ENCODE measurements at regions of chr6 and their contacts with region 1.

Region 1: DNA sequence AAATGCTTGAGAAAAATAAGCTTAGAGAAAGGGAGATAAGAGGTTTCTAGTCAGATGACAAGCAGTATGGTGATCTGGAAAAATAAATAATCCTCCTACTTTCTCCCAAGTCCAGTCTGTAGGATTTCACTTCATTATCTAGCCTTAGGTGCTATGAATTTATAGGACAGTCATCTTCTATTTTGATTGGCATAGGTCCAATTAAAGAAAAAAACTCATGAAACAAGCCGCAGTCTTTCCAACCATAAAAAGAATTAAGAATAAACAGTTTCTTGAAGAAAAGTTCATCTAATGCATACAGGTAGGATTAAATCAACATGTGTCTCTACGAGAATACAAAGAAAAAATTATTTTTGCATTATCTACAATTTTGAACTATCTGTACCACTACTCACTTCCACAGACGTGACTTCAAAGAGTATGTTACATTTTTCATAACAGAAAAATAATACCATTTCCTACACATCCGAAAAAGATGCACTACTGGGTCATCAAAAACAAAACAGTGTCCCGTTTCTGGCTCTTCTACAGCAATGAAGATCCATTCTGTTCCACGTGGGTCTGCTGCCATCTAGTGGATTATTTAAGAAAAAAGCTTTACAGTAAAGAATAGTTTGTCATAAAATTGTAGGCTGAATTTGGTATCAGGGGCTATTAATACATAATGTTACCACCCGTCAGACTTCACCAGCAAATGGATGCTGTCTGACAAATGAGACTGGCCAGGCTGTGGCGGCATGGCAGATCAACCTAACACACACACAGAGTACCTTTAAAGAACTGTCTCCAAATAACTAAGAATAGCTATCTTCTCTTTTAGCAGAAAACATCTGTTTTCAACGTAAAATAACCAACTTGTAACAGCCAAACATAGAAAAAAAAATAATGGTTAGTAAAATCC is 28.9 kb downstream of the STX7 start:
- DNase-seq: peak; percentile 33
- CTCF ChIP-seq: peak; percentile 50

Region 2: GRCh38 chr6:132190097-132190814 is 293.8 kb before region 1 on chr6:
- CTCF ChIA-PET with region 1: no interaction called
- POLR2A ChIA-PET with region 1: no interaction called
- DNase-seq: peak; percentile 20
- CTCF ChIP-seq: no peak

Region 3: GRCh38 chr6:132270726-132271402 is 213.2 kb before region 1 on chr6:
- CTCF ChIA-PET with region 1: interaction called, 11 read pairs
- POLR2A ChIA-PET with region 1: no interaction called
- DNase-seq: no peak
- CTCF ChIP-seq: no peak

Region 4: DNA sequence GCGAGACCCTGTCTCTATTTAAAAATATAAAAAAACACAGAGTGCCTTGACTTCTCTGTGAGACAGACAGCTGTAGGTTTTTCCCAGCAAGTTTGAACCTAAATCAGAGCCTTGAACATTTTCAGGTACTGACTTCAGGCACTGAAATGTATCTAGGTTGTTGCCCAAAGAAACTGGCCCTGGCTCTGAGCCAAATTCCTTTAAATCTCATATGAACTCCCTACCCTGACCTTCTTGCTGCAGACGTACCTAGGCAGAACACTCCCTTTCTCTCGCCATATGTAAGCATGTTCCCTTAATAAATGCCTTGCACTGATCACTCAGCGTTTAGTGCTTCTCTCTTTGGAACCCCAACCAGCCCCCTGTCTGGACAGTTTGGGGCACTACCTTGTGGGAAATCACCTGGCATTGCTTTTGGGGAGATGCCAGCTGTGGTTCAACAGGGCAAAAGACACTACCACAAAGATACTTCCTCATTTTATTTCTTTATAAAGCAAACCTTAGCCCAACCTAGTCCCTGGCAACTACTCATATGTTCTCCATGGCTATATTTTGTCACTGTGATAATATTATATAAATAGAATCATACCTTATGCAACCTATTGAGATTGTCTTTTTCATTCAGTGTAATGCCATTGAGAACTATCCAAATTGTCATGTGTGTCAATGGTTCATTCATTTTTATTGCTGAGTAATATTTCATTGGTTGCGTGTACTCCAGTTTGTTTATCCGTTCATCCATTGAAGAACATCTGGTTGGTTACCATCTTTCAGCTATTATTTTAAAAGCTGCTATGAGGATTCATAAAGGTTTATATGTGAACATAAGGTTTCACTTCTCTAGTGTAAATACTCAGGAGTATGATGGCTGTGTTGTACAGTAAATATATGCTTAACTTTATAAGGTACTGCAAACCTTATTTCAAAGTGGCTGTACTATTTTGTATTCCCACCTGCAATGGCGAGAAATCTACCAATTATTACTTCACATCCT is 197.7 kb before region 1 on chr6:
- CTCF ChIA-PET with region 1: interaction called, 285 read pairs
- POLR2A ChIA-PET with region 1: no interaction called
- DNase-seq: no peak
- CTCF ChIP-seq: no peak

Region 5: DNA sequence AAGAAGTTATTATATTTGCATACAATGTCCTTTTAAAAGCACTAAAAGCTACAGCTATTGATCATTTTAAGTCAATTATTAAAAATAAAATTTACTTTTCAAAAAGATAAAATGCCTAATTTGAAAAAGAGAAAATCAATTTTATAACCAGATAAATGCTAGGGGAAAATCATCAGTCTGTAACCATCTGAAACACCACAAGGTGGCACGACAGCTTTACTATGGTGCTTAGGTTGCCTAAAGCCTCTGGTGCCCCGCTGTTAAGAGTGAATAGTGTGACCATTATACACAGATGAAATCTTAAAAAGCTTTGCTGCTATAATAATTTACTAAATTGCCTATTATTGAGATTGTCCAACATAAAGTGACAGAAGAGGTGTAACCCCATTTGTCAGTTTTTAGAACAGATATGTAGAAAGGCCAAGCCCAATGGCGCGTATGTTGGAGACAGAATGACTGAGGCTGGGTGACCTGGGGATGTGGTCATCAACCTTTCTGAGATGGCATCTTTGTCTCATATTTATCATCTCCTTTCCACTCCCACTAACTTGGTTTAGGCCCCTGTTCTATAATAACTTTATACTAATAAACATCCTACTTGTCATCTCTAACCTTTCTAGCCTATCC is 183.6 kb before region 1 on chr6:
- CTCF ChIA-PET with region 1: interaction called, 165 read pairs
- POLR2A ChIA-PET with region 1: no interaction called
- DNase-seq: peak; percentile 18
- CTCF ChIP-seq: peak; percentile 57

Region 6: GRCh38 chr6:132456700-132457143 is 27.3 kb before region 1 on chr6:
- CTCF ChIA-PET with region 1: interaction called, 10 read pairs
- POLR2A ChIA-PET with region 1: no interaction called
- DNase-seq: peak; percentile 65
- CTCF ChIP-seq: peak; percentile 74

Region 7: GRCh38 chr6:132465530-132466485 is 18.2 kb before region 1 on chr6:
- CTCF ChIA-PET with region 1: interaction called, 40 read pairs
- POLR2A ChIA-PET with region 1: no interaction called
- DNase-seq: peak; percentile 28
- CTCF ChIP-seq: no peak

Region 8: GRCh38 chr6:132498638-132499037 is 14.6 kb after region 1 on chr6:
- CTCF ChIA-PET with region 1: interaction called, 66 read pairs
- POLR2A ChIA-PET with region 1: no interaction called
- DNase-seq: no peak
- CTCF ChIP-seq: no peak

Region 9: GRCh38 chr6:132750455-132751248 is 266.6 kb after region 1 on chr6:
- CTCF ChIA-PET with region 1: no interaction called
- POLR2A ChIA-PET with region 1: no interaction called
- DNase-seq: peak; percentile 43
- CTCF ChIP-seq: no peak